Right ventricle myocardium inferior (tissue), 1 donor: ENCODE measurements at regions of chr10 and their contacts with region 1.

Region 1: DNA sequence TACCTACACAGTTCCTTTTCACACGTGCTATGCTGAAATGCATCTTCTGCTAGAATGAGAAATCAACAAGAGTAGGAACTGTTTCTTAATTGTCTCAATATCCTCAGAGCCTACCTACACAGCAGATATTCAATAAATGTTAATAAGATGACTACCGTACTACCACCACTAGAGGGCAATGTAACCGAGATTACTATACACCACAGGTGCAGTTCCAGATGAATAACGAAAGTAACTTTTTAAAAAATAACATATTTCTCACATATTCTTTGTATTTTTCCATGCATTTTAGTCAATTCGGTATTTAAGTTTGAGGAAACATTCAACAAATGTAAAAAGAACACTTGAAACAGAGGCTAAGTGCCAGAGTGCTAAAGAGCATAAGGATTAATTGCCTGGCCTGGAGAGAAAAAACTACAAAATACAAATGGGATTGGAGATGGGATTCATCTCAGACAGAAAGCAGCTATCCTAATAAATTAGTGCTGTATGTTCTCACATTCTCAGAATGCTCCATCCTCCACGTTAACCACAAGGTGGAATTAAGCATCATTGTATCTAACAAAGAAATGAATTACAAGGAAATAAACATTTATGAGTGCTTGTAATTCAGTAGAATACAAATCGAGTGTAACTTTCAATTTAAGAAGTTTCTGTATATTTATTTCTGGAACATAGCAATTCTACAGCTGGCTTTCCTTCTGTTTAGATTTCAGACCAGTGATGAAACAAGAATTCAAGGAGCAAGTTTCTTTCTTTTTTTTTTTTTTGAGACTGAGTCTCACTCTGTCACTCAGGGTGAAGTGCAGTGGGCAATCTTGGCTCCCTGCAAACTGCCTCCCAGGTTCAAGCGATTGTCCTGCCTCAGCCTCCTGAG is 20.3 kb upstream of the HECTD2 start:
- DNase-seq: no peak
- ATAC-seq: peak; percentile 60

Region 2: DNA sequence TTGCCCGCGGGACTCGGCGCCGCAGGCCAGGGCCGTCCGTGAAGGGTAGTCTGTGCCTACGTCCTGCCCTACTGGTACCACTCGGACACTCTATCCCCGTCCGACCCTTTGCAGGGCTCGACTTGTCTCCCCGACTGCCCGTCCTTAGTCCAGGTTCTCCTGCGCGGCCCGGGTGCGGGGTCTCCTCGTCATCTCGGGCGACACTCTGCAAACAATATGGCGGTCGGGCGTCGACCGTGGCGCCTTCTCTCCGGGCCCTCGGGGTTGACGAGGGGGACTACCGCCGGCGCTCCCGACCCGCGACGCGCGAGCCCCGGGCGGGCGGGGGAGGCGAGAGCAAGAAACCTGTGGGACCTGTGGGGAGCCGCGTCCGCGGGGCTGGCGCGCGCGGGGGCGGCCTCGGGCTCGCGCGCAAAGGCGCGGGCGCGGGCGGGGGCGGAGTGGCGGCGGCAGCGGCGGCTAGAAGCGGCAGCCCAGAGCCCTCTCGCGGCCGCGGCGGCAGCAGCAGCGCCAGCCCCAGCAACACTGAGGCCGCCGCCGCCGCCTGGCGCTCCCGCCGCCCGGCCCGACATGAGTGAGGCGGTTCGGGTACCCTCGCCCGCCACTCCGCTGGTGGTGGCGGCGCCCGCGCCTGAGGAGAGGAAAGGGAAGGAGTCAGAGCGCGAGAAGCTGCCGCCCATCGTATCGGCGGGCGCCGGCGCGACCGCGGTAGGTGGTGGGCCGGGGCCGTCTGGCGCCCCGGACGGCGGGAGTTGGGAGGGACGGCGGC is 20.2 kb after region 1 on chr10 and contains the start of gene HECTD2:
- intact Hi-C with region 1: loop called (anchors 1 kb)
- DNase-seq: peak; percentile 86
- ATAC-seq: peak; percentile 82
- total RNA-seq, gene HECTD2: 2.5 TPM

Region 3: GRCh38 chr10:91551856-91552255 is 162.0 kb after region 1 on chr10:
- intact Hi-C with region 1: loop called (anchors 10 kb)
- DNase-seq: peak; percentile 64
- ATAC-seq: peak; percentile 82